IMR-90 (cell line): ENCODE measurements at regions of chr1 and their contacts with region 1.

Region 1: DNA sequence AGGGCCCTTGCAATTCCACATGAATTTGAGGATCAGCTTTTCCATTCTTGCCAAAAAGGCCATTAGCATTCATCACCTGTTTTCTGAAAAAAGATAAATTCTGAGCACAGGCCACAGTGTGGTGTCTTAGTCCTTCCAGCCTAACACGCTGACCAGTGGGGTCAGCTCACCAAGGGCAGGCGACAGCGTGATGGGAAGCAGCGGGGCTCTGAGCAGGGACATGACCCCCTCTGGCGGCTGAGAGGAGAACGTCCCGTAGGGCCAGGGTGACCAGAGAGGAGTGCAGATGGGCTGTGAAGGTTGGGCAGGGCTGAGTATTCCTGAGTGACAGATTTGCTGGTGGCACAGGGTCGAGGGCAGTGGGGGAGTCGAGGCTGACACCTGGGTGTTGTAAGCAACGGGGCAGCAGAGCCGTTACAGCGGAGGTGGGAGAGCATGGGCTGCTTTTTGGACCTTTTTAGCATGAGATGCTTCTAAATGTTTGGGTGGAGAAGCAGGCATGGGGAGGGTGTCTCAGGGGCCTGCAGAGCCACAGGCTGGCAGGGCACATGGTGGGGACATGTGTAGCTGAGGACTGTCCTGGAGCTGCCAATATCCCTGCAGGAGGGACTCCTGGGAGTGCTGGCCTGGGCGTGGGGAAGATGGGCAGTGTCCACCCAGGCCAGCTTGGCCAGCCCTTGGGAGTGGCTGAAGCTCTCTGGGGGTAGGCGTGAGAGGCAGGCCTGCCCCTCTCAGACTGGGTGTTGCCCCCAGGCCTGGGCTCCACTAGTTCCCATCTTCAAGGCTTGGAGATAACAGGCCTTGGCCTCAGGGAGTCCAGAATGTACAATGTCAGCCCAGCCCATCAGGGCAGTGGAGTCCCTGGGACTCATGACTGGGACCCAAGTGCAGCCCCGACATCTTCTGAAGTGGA is 8.6 kb upstream of the CALML6 start:
- DNase-seq: peak; percentile 75
- ATAC-seq: peak; percentile 62
- H3K4me3 ChIP-seq: no peak overlapping the region
- H3K27ac ChIP-seq: peak overlapping the region; percentile 31; the same call in 1 of the 2 replicates
- H3K4me1 ChIP-seq: peaks cover 4% of the 10 kb centered on the region
- H3K27me3 ChIP-seq: no peaks in the 10 kb centered on the region
- CTCF ChIP-seq: peak; percentile 95
- POLR2A ChIP-seq: no peak
- RAD21 ChIP-seq: peak; percentile 98

Region 2: GRCh38 chr1:1574721-1575537 is 331.5 kb before region 1 on chr1 and contains the start of gene SSU72:
- CTCF ChIA-PET with region 1: no interaction called
- POLR2A ChIA-PET with region 1: no interaction called
- dilution Hi-C with region 1: no loop called
- in situ Hi-C with region 1: no loop called
- intact Hi-C with region 1: loop called (anchors 10 kb)
- DNase-seq: peak; percentile 92
- ATAC-seq: peak; percentile 90
- H3K4me3 ChIP-seq: peak within 1 kb of the TSS; percentile 71
- H3K27ac ChIP-seq: peak within 1 kb of the TSS; percentile 92
- H3K4me1 ChIP-seq: no peaks in the 10 kb centered on the region
- H3K27me3 ChIP-seq: peaks cover 11% of the 10 kb centered on the region; the same call in 1 of the 2 replicates
- CTCF ChIP-seq: no peak
- POLR2A ChIP-seq: peak; percentile 95
- RAD21 ChIP-seq: no peak
- total RNA-seq, gene SSU72: 33.7 and 43.3 TPM in 2 replicates

Region 3: DNA sequence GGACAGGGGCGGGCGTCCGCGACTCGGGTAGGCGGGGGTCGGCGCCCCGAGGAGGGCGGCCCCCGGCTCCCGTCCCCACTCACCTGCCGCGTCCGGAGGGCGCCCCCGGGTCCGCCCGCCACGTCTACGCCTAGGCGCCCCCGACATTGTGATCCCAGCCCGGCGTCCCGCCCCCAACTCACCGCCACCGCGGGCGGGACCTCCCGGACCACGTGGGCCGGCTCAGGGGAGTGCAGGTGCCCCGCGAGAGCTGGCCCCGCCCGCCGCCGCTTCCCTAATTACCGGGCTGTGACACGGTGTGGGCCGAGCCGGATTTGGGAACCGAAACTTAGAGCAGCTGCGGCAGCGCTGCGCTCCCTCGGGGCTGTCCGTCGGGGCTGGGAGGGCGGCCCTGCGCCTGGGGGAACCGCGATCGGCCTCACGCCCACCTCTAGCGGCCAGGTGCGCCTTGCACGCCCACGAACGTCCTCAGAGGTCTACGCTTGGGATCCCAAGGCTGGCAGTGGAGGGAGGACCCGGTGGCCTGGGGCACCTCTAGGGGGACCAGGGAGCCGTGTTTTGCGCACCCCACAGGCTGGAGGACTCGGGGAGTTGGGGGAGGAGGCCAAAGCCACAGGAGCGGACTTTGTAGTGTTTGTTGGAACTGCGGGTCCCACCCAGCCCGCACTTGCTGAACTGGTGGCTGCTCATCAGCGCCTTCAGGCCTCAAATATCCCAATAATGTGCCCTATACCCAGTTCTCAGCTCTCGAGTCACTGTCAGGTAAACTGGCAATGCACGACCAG is 127.6 kb before region 1 on chr1:
- CTCF ChIA-PET with region 1: interaction called, 3 read pairs
- POLR2A ChIA-PET with region 1: no interaction called
- dilution Hi-C with region 1: no loop called
- in situ Hi-C with region 1: loop called (anchors 10 kb)
- intact Hi-C with region 1: loop called (anchors 1 kb)
- DNase-seq: no peak
- ATAC-seq: peak; percentile 1; the same call in 1 of the 2 replicates
- H3K4me3 ChIP-seq: peak overlapping the region; percentile 72
- H3K27ac ChIP-seq: peak overlapping the region; percentile 30; the same call in 1 of the 2 replicates
- H3K4me1 ChIP-seq: peaks cover 22% of the 10 kb centered on the region
- H3K27me3 ChIP-seq: no peaks in the 10 kb centered on the region
- CTCF ChIP-seq: no peak
- POLR2A ChIP-seq: no peak
- RAD21 ChIP-seq: no peak

Region 4: GRCh38 chr1:1788646-1789431 is 117.6 kb before region 1 on chr1:
- CTCF ChIA-PET with region 1: interaction called, 3 read pairs
- POLR2A ChIA-PET with region 1: interaction called, 6 read pairs
- dilution Hi-C with region 1: no loop called
- in situ Hi-C with region 1: loop called (anchors 10 kb)
- intact Hi-C with region 1: loop called (anchors 2 kb)
- DNase-seq: peak; percentile 42
- ATAC-seq: peak; percentile 25; the same call in 1 of the 2 replicates
- H3K4me3 ChIP-seq: no peak overlapping the region
- H3K27ac ChIP-seq: no peak overlapping the region
- H3K4me1 ChIP-seq: no peaks in the 10 kb centered on the region
- H3K27me3 ChIP-seq: no peaks in the 10 kb centered on the region
- CTCF ChIP-seq: peak; percentile 27
- POLR2A ChIP-seq: no peak
- RAD21 ChIP-seq: no peak

Region 5: DNA sequence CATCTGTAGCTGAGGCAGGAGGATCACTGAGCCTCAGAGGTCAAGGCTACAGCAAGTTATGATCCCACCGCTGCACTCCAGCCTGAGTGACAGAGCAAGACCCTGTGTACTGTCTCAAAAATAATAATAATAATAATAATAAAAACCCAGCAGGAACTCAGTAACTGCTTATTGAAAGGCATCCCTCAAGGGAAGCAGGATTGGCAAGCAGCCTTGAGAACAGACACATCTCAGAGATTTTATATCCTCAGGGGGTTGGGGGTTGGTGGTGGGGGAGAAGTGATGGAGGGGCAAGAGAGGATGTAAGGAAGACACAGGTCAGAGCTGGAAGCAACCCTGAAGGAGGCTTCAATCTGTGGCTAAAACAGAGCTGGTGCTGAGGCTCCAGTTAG is 45.1 kb before region 1 on chr1:
- CTCF ChIA-PET with region 1: no interaction called
- POLR2A ChIA-PET with region 1: no interaction called
- dilution Hi-C with region 1: no loop called
- in situ Hi-C with region 1: no loop called
- intact Hi-C with region 1: no loop called
- DNase-seq: no peak
- ATAC-seq: no peak
- H3K4me3 ChIP-seq: no peak overlapping the region
- H3K27ac ChIP-seq: no peak overlapping the region
- H3K4me1 ChIP-seq: peaks cover 24% of the 10 kb centered on the region
- H3K27me3 ChIP-seq: no peaks in the 10 kb centered on the region
- CTCF ChIP-seq: no peak
- POLR2A ChIP-seq: no peak
- RAD21 ChIP-seq: no peak